Left ventricle myocardium superior (tissue), 1 donor: ENCODE measurements at regions of chr6 and their contacts with region 1.

Region 1: GRCh38 chr6:14066782-14067406 is 50.7 kb upstream of the CD83 start:
- DNase-seq: no peak
- ATAC-seq: peak; percentile 71

Region 2: DNA sequence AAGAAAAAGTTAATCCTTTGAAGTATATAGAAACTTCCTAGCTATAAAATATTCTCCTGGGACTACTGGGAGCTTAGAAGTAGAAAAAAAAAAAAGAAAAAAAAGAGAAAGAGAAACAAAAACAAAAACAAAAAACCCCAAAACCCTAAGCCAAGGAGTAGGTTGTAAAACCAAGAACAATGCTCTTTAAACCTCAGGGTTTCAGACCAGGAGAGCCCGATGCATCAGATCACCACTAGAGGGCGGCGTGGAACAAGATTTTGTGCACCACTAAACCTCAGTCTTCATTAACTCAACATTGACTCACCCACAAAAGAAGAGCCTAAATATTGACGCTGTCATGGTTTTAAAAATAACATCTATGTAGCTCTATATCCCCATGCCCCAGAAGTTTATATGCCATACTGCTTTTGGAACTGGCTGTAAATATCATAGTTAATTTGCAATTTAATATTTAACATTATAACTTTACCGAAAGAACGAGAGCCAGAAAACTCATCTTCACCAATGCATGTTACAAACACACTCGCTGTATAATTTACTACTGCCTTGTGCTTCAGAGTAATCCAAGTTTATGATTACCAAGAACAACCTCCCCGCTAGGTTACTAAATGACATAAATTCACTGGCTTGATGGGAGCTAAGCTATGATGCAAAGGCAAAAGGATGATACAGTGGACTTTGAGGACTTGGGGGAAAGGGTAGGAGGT is 271.7 kb before region 1 on chr6:
- intact Hi-C with region 1: loop called (anchors 5 kb)
- DNase-seq: peak; percentile 83
- ATAC-seq: peak; percentile 83

Region 3: DNA sequence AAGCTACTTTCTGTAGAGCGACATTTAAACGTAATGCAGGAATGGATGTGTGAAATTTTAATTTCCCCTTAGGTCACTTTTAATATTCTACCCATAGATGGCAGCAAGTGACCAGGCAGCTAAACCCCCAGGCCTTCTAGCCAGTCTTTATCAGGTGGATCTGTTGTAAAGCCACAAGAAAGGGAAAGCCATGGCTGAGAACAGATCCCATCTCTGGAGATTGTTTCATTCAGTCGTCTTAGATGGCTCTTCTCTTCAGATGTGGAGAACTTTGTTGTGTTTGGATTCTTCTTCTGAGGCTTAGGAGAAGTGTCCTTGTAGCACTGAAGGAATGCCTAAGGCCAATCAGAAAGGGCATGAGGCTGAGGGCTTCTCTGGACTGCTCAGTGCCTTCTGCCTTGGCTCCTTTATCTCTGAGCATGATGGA is 157.9 kb before region 1 on chr6:
- intact Hi-C with region 1: loop called (anchors 5 kb)
- DNase-seq: no peak
- ATAC-seq: peak; percentile 57

Region 4: DNA sequence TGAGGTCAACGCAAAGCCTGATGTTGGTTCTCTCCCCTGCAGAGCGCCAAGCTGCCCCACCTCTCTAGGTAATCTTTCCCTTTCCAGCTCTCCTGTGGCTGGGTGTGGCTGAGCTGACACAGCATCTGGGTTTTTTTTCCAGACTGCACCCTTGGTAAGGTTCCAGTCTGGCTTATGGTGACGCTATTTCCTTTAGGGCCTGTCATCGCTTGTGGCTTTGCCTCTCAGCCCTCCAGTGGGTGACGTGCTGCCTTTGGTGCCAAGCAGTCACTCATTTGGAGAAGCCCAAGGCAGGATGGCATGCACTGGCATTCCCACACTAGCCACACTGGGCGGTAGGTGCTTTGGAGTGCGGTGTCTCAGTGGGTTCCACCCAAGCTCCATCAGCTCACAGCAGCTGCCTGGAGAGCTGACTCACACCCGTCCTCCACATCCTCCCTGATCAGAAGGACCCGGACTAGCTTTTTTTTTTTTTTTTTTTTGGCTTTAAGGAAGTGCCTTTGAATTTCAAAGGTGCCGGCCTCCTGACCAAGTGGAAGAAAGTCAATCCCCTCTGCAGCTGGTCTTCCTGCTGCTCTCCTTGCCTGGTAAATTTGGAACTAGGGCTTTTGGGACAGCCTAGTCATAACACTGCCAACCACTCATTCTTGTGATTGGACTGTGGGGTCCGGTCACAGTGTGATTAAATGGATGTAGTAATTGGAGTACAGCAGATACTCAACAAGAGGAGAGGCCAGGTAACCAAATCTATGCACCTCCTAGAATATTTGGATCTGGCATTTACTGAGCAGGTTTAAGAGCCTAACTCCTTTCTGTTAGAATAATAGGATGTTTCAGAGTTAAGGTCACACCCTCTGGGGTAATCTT is 204.3 kb after region 1 on chr6:
- intact Hi-C with region 1: no loop called
- DNase-seq: no peak
- ATAC-seq: no peak